AG04449 (cell line): ENCODE measurements at regions of chr17 and their contacts with region 1.

Region 1: GRCh38 chr17:50816771-50817751 is 18.3 kb upstream of the WFIKKN2 start:
- DNase-seq: no peak
- H3K4me3 ChIP-seq: no peak overlapping the region
- CTCF ChIP-seq: peak; percentile 67

Region 2: DNA sequence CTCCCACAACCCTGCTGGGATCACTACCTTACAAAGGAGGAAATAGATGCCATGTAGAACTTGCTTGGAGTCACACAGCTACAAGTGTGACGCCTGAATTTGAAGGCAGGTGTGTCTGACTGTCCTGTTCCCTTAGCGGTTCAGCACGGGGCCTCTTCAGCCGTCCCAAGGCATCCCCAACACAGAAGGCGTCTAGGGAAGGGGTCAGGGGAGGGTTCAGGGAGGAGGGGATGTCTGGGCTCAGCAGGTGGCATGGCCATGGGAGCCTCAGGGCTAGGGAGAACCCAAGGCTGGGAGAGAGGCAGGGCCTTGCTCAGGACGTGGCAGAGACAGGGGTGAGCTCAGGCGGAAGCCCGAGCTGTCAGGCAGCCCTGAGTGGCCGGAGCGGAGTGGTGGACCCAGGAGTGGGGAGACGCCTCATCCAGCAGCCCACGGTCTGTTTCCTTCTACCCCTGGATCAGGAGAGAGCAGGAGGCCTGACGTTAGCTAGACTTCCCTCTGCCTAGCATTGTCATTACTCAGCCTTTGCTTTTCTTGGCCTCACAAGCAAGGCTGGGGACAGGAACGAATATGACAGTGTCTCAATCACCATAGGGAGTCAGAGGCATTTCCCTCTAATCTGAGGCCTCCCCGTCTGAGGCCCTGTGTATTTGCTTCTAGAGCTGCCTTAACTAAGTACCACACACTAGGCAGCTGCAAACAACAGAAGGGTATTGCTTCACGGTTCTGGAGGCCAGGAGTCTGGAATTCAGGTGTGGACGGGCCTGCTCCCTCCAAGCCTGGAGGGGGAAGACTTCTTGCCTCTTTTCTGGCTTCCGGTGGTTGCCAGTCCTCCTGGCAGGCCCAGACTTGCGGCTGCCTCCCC is 18.4 kb before region 1 on chr17:
- CTCF ChIA-PET with region 1: interaction called, 26 read pairs
- POLR2A ChIA-PET with region 1: no interaction called
- DNase-seq: no peak
- H3K4me3 ChIP-seq: no peak overlapping the region
- CTCF ChIP-seq: no peak

Region 3: GRCh38 chr17:50806141-50806643 is 10.9 kb before region 1 on chr17:
- CTCF ChIA-PET with region 1: interaction called, 26 read pairs
- POLR2A ChIA-PET with region 1: no interaction called
- DNase-seq: no peak
- H3K4me3 ChIP-seq: no peak overlapping the region
- CTCF ChIP-seq: no peak

Region 4: GRCh38 chr17:50935201-50935995 is 118.3 kb after region 1 on chr17:
- CTCF ChIA-PET with region 1: no interaction called
- POLR2A ChIA-PET with region 1: no interaction called
- DNase-seq: no peak
- H3K4me3 ChIP-seq: no peak overlapping the region
- CTCF ChIP-seq: no peak